A549 (cell line): ENCODE measurements at regions of chr15 and their contacts with region 1.

Region 1: DNA sequence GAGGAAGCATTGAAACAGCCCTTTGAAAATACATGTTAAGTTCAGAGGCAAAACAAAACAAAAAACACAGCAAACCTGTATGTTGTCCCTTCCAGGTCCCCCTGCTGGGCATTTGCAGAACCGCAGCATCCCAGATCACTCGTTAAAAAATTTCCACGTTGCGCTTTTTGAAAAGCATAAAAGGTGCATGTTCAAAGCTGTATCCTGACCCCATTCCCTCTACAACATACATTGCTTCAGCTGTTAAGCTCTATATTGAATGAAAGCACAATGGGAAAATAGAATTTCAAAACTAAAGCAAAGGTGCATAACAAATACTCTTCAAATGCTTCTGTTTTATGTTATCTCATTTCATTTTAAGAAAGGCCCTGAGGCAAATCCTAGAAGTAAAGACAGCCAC is 328.3 kb downstream of the THSD4 start:
- DNase-seq: peak; percentile 47 to 77
- ATAC-seq: peak; percentile 15 to 25; a peak in 1 of 6 replicates
- H3K4me3 ChIP-seq: no peak overlapping the region
- H3K27ac ChIP-seq: peak overlapping the region; percentile 85
- H3K4me1 ChIP-seq: peaks cover 75% of the 10 kb centered on the region
- CTCF ChIP-seq: peak; percentile 81
- EP300 ChIP-seq: no peak
- POLR2A ChIP-seq: no peak
- RAD21 ChIP-seq: peak; percentile 53 to 59

Region 2: GRCh38 chr15:70974004-70974832 is 469.3 kb before region 1 on chr15:
- CTCF ChIA-PET with region 1: interaction called, 15 read pairs
- POLR2A ChIA-PET with region 1: no interaction called
- DNase-seq: peak; percentile 22 to 70
- ATAC-seq: peak in 1 of 2 experiments; percentile 58; a peak in 3 of 6 replicates
- H3K4me3 ChIP-seq: no peak overlapping the region
- H3K27ac ChIP-seq: peak overlapping the region in 1 of 2 experiments; percentile 17; a peak in 1 of 6 replicates
- H3K4me1 ChIP-seq: no peaks in the 10 kb centered on the region
- CTCF ChIP-seq: peak; percentile 80
- EP300 ChIP-seq: no peak
- POLR2A ChIP-seq: no peak
- RAD21 ChIP-seq: peak; percentile 80 to 85

Region 3: DNA sequence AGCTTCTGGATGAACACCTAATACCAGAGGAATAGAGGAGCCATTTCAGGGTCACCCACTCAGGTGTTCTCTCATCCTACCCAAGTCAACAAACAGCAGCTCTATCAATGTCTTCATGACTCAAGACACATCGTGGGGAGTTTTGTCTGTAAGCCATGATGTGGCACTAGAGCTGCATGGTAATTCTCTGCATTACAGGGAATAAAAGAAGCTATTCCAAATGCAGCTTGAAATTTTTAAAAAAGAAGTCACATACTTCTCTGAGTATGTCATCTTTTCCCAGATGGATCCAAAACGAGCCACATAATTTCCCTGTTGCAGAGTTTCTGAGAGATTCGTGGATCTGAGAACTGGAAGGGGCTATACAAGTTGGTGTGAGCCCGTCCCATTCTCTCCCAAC is 334.4 kb before region 1 on chr15:
- CTCF ChIA-PET with region 1: interaction called, 33 read pairs
- POLR2A ChIA-PET with region 1: no interaction called
- DNase-seq: no peak
- ATAC-seq: peak in 1 of 2 experiments; percentile 35; a peak in 2 of 6 replicates
- H3K4me3 ChIP-seq: no peak overlapping the region
- H3K27ac ChIP-seq: peak overlapping the region; percentile 0 to 9; a peak in 1 of 6 replicates
- H3K4me1 ChIP-seq: peaks cover 23% of the 10 kb centered on the region
- CTCF ChIP-seq: no peak
- EP300 ChIP-seq: no peak
- POLR2A ChIP-seq: no peak
- RAD21 ChIP-seq: peak; percentile 36 to 49; a peak in 4 of 5 replicates

Region 4: DNA sequence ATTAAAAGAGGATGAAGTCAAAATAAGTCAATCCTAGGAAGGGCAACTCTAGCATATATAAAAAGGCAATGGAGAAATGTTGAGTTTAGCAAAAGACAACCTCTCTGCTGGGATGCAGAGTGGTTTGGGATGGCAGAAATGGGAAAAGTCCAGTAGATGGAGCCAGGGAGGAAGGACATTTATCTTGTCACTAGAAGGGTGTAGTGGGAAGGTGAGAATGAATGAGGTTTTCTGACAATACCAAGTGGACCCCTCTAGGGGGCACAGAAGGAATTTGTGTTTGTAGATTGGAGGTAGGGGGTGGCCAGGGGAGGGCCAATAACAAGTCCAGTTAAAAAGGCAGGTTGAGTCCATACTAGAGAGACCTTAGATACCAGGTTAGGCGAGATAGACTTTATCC is 248.3 kb before region 1 on chr15:
- CTCF ChIA-PET with region 1: interaction called, 10 read pairs
- POLR2A ChIA-PET with region 1: no interaction called
- DNase-seq: peak; percentile 60 to 72
- ATAC-seq: peak; percentile 36 to 81; a peak in 4 of 6 replicates
- H3K4me3 ChIP-seq: no peak overlapping the region
- H3K27ac ChIP-seq: peak overlapping the region in 1 of 2 experiments; percentile 54; a peak in 4 of 6 replicates
- H3K4me1 ChIP-seq: peaks cover 18% of the 10 kb centered on the region
- CTCF ChIP-seq: peak; percentile 51
- EP300 ChIP-seq: no peak
- POLR2A ChIP-seq: no peak
- RAD21 ChIP-seq: peak; percentile 53 to 70

Region 5: GRCh38 chr15:71397377-71397776 is 46.2 kb before region 1 on chr15:
- CTCF ChIA-PET with region 1: interaction called, 10 read pairs
- POLR2A ChIA-PET with region 1: no interaction called
- DNase-seq: peak in 1 of 2 experiments; percentile 43
- ATAC-seq: no peak
- H3K4me3 ChIP-seq: no peak overlapping the region
- H3K27ac ChIP-seq: no peak overlapping the region; a peak in 1 of 6 replicates
- H3K4me1 ChIP-seq: peaks cover 12% of the 10 kb centered on the region
- CTCF ChIP-seq: no peak
- EP300 ChIP-seq: no peak
- POLR2A ChIP-seq: no peak
- RAD21 ChIP-seq: no peak

Region 6: DNA sequence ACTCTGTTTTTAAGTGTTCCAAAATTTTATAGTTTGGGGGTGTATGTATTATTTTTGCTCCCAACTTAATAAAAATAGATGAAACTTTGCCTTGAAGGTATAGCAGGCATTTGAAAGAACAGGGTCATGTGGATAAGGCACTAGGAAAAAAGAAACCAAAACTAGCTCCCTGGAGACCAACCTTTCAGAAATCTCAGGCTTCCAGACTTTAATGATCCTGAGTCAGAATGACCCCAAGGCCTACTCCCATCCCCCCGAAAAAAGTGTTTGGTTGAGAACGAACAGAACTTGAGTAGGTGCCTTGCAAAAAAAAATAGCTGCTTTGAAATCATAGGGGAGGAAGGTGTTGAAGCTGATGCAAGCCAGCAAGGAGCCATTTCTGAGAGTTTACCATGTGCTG is 18.8 kb before region 1 on chr15:
- CTCF ChIA-PET with region 1: interaction called, 29 read pairs
- POLR2A ChIA-PET with region 1: no interaction called
- DNase-seq: no peak
- ATAC-seq: no peak
- H3K4me3 ChIP-seq: no peak overlapping the region
- H3K27ac ChIP-seq: peak overlapping the region; percentile 15 to 58; a peak in 4 of 6 replicates
- H3K4me1 ChIP-seq: 0 out of 3 replicates have a peak, but pooled peaks cover 7% of the 10 kb centered on the region
- CTCF ChIP-seq: no peak
- EP300 ChIP-seq: no peak
- POLR2A ChIP-seq: no peak
- RAD21 ChIP-seq: no peak

Region 7: GRCh38 chr15:71502077-71502432 is 58.5 kb after region 1 on chr15:
- CTCF ChIA-PET with region 1: no interaction called
- POLR2A ChIA-PET with region 1: no interaction called
- DNase-seq: no peak
- ATAC-seq: no peak
- H3K4me3 ChIP-seq: no peak overlapping the region
- H3K27ac ChIP-seq: no peak overlapping the region
- H3K4me1 ChIP-seq: no peaks in the 10 kb centered on the region
- CTCF ChIP-seq: no peak
- EP300 ChIP-seq: no peak
- POLR2A ChIP-seq: no peak
- RAD21 ChIP-seq: no peak

Region 8: GRCh38 chr15:71752604-71753289 is 309.2 kb after region 1 on chr15:
- CTCF ChIA-PET with region 1: interaction called, 27 read pairs
- POLR2A ChIA-PET with region 1: interaction called, 3 read pairs
- DNase-seq: peak; percentile 93 to 97
- ATAC-seq: peak; percentile 82 to 84
- H3K4me3 ChIP-seq: no peak overlapping the region
- H3K27ac ChIP-seq: peak overlapping the region; percentile 84 to 99
- H3K4me1 ChIP-seq: peaks cover 55% of the 10 kb centered on the region
- CTCF ChIP-seq: peak; percentile 91
- EP300 ChIP-seq: peak; percentile 70 to 73; a peak in 2 of 5 replicates
- POLR2A ChIP-seq: no peak
- RAD21 ChIP-seq: peak; percentile 94